ENCODE measurements at regions of chrX and their contacts with region 1.

Region 1: DNA sequence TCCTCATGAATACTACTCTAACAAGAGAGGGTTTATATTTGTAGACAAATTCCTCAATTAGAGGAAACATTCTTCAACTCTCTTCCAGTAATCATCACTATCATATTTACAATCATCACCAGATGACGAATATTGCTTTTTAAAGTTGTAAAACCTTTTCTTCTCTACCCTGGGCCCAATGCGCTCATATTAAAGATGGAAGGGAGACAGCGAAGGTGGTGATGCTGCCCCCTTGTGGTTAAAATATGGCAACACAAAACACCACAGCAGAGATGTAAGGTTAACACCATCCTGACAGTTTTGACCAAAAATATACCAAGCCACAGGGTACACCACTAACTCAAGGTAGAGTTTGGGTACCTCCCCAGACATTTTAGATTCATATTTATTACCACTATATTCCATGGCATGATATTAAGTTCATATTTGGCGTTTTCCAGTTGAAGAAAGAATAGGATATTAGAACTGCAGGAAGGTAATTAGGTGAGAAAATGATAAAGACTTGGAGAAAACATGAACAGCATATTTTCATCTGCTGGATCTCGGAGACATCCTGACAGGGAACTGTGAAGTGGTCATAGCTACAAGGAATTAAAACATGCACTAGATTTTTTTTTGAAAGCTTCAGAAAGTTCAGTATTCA is 72.8 kb downstream of the SLC9A7 start:
- DNase-seq: no peak

Region 2: GRCh38 chrX:46554942-46555341 is 131.2 kb before region 1 on chrX:
- intact Hi-C with region 1: loop called (anchors 5 kb)
- DNase-seq: no peak

Region 3: GRCh38 chrX:46865281-46865680 is 179.2 kb after region 1 on chrX:
- intact Hi-C with region 1: no loop called
- DNase-seq: no peak